CD8-positive, alpha-beta memory T cell (primary cell): ENCODE measurements at regions of chr1 and their contacts with region 1.

Region 1: DNA sequence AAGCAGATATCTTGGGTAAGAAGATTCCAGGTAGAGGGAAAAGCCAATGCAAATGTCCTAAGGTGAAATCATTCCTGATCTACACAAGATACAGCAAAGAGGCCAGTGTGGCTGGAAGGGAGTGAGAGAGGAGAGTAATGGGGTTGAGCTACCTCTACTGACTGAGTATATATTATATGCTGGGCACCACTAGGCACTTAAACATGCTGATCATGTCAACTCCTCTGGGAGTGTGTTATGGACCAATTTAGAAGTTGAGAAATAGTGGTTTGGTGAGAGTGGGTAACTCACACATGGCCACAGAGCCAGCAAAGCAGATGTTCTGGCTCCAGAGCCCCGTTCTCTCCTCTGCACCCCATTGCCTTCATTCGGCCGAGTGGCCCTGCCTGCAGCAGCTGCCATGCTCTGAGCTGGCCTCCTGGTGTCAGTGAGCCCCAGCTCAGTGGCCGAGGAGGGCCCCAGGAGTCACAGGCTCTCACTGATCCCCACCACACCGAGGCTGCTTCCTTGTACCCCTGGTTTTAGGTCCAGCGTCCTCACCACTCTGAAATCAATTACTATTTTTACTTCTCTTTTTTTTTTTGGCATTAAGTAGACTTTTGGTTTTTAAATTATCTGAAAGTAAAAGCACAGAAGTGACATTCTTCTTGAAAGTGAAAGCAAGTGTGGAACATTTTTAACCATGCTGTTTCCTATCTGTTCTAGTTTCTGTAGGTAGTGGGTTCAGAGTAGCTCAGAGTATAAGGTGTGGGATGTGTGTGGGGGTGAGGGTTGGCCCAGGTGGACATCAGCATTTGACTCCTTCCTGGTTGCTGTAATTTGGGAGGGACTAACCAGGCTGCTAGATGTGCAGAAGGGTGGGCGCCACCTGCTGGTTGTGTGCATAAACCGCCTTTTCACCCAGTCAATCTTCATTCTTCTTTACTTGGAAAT is 45.8 kb upstream of the CRNN start:
- DNase-seq: peak; percentile 55 to 81 (median 61)
- H3K4me3 ChIP-seq: peak overlapping the region; percentile 36
- H3K4me3 Mint-ChIP-seq: peak overlapping the region; percentile 5 to 84 (median 72)
- H3K27ac ChIP-seq: no peak overlapping the region
- H3K27ac Mint-ChIP-seq: peak overlapping the region; percentile 25 to 98 (median 87)
- H3K4me1 ChIP-seq: peaks cover 15% of the 10 kb centered on the region
- H3K4me1 Mint-ChIP-seq: peaks cover 22 to 31% (median 29%) of the 10 kb centered on the region in 3 donors
- H3K27me3 ChIP-seq: no peaks in the 10 kb centered on the region
- H3K27me3 Mint-ChIP-seq: peaks cover 0 to 8% of the 10 kb centered on the region in 2 donors

Region 2: GRCh38 chr1:152047730-152048402 is 412.0 kb before region 1 on chr1:
- CTCF ChIA-PET with region 1: interaction called, 23 read pairs
- POLR2A ChIA-PET with region 1: no interaction called
- DNase-seq: peak; percentile 76 to 91 (median 81)
- H3K4me3 ChIP-seq: peak overlapping the region; percentile 45
- H3K4me3 Mint-ChIP-seq: peak overlapping the region; percentile 42 to 88 (median 79)
- H3K27ac ChIP-seq: peak overlapping the region; percentile 87
- H3K27ac Mint-ChIP-seq: peak overlapping the region; percentile 95 to 99 (median 99)
- H3K4me1 ChIP-seq: peaks cover 23% of the 10 kb centered on the region
- H3K4me1 Mint-ChIP-seq: peaks cover 18 to 31% (median 30%) of the 10 kb centered on the region in 3 donors
- H3K27me3 ChIP-seq: no peaks in the 10 kb centered on the region
- H3K27me3 Mint-ChIP-seq: peaks cover under 1 to 4% of the 10 kb centered on the region in 2 donors

Region 3: DNA sequence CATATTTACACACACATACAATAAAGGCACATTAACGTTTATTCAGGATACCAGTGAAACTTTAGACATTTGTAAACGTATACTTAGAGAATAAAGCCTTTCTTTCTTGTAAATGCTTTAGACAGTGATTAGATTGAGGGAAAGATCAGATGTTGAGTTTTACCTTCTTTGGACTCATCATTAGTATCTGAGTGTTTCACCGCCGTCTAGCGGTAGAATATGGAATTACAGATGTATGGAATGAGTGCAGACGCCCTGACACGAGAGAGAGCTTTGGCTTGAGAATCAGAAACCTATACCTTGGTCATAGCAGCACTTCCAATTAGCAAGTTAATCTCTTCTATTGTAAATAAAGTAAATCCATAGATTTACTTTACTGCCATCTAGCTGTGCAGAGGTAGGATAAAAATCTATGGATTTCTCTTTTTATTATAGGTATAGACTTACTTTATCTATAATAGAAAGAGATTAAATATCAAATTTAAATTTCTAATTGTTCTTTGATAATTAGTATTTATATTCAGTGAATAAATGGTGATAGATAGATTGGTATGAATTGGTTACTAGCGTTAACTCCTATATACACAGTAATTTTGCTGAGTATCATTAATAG is 112.6 kb before region 1 on chr1:
- CTCF ChIA-PET with region 1: interaction called, 15 read pairs
- POLR2A ChIA-PET with region 1: no interaction called
- DNase-seq: peak in 4 of 5 donors; percentile 16 to 54 (median 32)
- H3K4me3 ChIP-seq: no peak overlapping the region
- H3K4me3 Mint-ChIP-seq: no peak overlapping the region
- H3K27ac ChIP-seq: no peak overlapping the region
- H3K27ac Mint-ChIP-seq: no peak overlapping the region
- H3K4me1 ChIP-seq: no peaks in the 10 kb centered on the region
- H3K4me1 Mint-ChIP-seq: no peaks in the 10 kb centered on the region
- H3K27me3 ChIP-seq: no peaks in the 10 kb centered on the region
- H3K27me3 Mint-ChIP-seq: peaks cover 3 to 17% of the 10 kb centered on the region in 2 donors

Region 4: DNA sequence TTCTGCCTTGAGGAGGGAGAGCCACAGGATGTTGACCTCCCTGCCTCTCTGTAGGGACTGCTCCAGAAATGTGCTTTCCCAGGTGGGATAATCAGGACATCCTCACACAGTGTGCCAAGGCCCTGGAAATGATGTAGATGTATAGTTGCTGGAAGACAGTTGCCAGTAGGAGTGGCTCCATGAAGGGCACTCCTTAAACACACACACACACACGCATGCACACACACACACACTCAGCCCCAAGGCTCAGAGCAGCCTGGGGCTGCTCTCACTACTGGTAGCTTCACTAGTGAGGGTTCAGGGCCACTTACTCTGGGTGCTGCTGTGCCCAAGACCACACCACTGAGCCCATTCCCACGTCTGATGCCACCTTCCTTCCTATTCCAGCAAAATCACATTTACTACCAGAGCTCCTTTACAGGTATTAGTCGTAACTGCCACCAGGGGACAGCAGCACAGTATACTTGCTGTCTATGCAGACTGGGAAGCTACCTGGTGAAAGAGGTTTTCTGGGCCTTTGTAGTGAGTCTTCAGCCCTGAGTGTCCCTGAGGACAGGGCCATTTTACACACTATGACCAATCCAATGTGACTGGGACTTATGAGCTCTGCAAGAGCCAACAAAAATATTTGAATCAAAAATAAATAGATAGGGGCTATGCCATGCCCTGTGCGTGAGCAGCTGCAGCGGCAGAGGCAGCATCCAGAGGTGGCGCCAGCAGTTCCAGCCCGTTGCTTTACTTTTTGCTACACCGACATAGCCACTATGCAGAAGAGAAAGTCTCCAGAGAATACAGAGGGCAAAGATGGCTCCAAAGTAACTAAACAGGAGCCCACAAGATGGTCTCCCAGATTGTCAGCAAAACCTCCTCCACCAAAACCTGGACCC is 60.8 kb before region 1 on chr1:
- CTCF ChIA-PET with region 1: interaction called, 36 read pairs
- POLR2A ChIA-PET with region 1: no interaction called
- DNase-seq: no peak
- H3K4me3 ChIP-seq: no peak overlapping the region
- H3K4me3 Mint-ChIP-seq: no peak overlapping the region
- H3K27ac ChIP-seq: no peak overlapping the region
- H3K27ac Mint-ChIP-seq: peak overlapping the region in 1 of 8 donors; percentile 78
- H3K4me1 ChIP-seq: no peaks in the 10 kb centered on the region
- H3K4me1 Mint-ChIP-seq: peaks cover 10 to 23% (median 13%) of the 10 kb centered on the region in 3 donors
- H3K27me3 ChIP-seq: no peaks in the 10 kb centered on the region
- H3K27me3 Mint-ChIP-seq: peaks cover 15 to 16% of the 10 kb centered on the region in 2 donors

Region 5: DNA sequence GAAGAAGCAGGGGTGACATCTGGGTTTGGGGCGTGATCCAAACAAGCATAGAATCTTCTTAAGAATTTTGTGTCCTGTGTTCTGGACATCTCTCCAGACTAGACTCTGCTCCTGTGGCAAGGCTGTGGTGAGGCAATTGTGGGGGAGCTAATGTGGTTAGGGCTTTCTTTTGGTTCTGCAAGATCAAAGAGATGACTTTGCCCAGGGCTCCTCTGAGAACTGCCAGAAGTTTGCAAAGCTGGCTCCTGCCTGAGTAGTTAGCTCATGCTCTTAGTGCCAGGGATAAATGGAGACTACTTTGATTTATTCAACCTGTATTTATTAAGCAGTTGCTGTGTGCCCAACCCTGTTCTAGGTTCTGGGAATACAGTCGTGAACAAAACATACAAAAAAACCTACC is 11.8 kb before region 1 on chr1:
- CTCF ChIA-PET with region 1: interaction called, 33 read pairs
- POLR2A ChIA-PET with region 1: no interaction called
- DNase-seq: no peak
- H3K4me3 ChIP-seq: no peak overlapping the region
- H3K4me3 Mint-ChIP-seq: no peak overlapping the region
- H3K27ac ChIP-seq: no peak overlapping the region
- H3K27ac Mint-ChIP-seq: no peak overlapping the region
- H3K4me1 ChIP-seq: no peaks in the 10 kb centered on the region
- H3K4me1 Mint-ChIP-seq: no peaks in the 10 kb centered on the region
- H3K27me3 ChIP-seq: no peaks in the 10 kb centered on the region
- H3K27me3 Mint-ChIP-seq: peaks cover 4 to 10% of the 10 kb centered on the region in 2 donors

Region 6: DNA sequence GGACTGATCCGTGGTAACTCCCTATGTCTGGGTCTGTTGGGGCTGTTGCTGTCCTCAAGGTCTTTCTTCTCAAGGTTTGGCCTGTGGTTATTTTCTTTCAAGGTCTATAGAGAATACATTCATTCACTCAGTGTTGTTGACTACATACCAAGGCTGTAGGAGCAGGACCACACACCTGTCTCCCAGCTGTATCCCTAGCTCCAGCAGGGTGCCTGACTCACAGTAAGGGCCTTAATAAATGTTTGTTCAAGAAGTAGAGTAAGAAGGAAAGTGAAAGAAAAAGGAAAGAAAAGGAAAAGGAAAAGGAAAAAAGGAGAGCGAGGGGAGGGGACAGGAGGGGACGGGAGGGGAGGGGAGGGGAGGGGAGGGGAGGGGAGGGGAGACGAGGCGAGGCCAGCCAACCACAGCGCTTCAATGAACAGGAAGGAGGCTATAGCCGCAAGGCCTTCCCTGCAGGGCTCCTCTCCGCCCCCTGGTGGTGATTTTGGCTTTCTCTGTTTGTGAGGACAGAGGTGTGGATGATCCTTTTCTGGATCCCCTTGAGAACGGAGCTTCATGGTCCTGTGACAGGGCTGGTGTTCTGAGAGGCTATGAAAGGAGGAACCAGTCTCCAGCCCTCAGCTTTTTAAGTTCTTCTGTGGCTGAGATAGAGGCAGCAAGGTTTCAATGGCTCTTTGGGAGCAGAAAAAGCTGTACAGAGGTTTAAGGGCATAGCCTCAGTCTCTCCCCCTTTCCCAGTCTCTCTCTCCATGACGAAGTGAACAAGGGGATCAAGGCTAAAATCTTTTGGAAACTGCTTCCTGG is 20.1 kb after region 1 on chr1:
- CTCF ChIA-PET with region 1: interaction called, 17 read pairs
- POLR2A ChIA-PET with region 1: no interaction called
- DNase-seq: peak; percentile 7 to 74 (median 48)
- H3K4me3 ChIP-seq: no peak overlapping the region
- H3K4me3 Mint-ChIP-seq: peak overlapping the region in 4 of 7 donors; percentile 20 to 61 (median 42)
- H3K27ac ChIP-seq: no peak overlapping the region
- H3K27ac Mint-ChIP-seq: peak overlapping the region in 7 of 8 donors; percentile 8 to 82 (median 20)
- H3K4me1 ChIP-seq: no peaks in the 10 kb centered on the region
- H3K4me1 Mint-ChIP-seq: peaks cover 7 to 15% (median 10%) of the 10 kb centered on the region in 3 donors
- H3K27me3 ChIP-seq: no peaks in the 10 kb centered on the region
- H3K27me3 Mint-ChIP-seq: peaks cover 0 to under 1% of the 10 kb centered on the region in 2 donors